ENCODE measurements at regions of chr2 and their contacts with region 1.

Region 1: GRCh38 chr2:43226558-43226954 is at the start of gene ZFP36L2:
- DNase-seq: peak; percentile 97
- ATAC-seq: peak; percentile 69
- H3K4me3 Mint-ChIP-seq: peak within 1 kb of the TSS; percentile 98
- H3K27ac Mint-ChIP-seq: peak within 1 kb of the TSS; percentile 90
- H3K4me1 Mint-ChIP-seq: peaks cover 33% of the 10 kb centered on the region
- H3K27me3 Mint-ChIP-seq: no peaks in the 10 kb centered on the region
- total RNA-seq, gene ZFP36L2: 118 to 158 TPM

Region 2: GRCh38 chr2:42974721-42975717 is 251.5 kb before region 1 on chr2:
- CTCF ChIA-PET with region 1: interaction called, 64 read pairs
- DNase-seq: peak; percentile 53
- ATAC-seq: no peak
- H3K4me3 Mint-ChIP-seq: no peak overlapping the region
- H3K27ac Mint-ChIP-seq: no peak overlapping the region
- H3K4me1 Mint-ChIP-seq: peaks cover 14% of the 10 kb centered on the region
- H3K27me3 Mint-ChIP-seq: no peaks in the 10 kb centered on the region

Region 3: GRCh38 chr2:43142921-43143438 is 83.6 kb before region 1 on chr2:
- CTCF ChIA-PET with region 1: interaction called, 666 read pairs
- DNase-seq: peak; percentile 75
- ATAC-seq: peak; percentile 70
- H3K4me3 Mint-ChIP-seq: peak overlapping the region; percentile 70
- H3K27ac Mint-ChIP-seq: peak overlapping the region; percentile 64
- H3K4me1 Mint-ChIP-seq: peaks cover 43% of the 10 kb centered on the region
- H3K27me3 Mint-ChIP-seq: no peaks in the 10 kb centered on the region

Region 4: GRCh38 chr2:43207553-43208293 is 18.8 kb before region 1 on chr2:
- CTCF ChIA-PET with region 1: no interaction called
- DNase-seq: no peak
- ATAC-seq: no peak
- H3K4me3 Mint-ChIP-seq: no peak overlapping the region
- H3K27ac Mint-ChIP-seq: no peak overlapping the region
- H3K4me1 Mint-ChIP-seq: peaks cover 4% of the 10 kb centered on the region
- H3K27me3 Mint-ChIP-seq: no peaks in the 10 kb centered on the region

Region 5: GRCh38 chr2:43484323-43484930 is 257.9 kb after region 1 on chr2:
- CTCF ChIA-PET with region 1: interaction called, 64 read pairs
- DNase-seq: no peak
- ATAC-seq: peak; percentile 61
- H3K4me3 Mint-ChIP-seq: no peak overlapping the region
- H3K27ac Mint-ChIP-seq: no peak overlapping the region
- H3K4me1 Mint-ChIP-seq: peaks cover 40% of the 10 kb centered on the region
- H3K27me3 Mint-ChIP-seq: no peaks in the 10 kb centered on the region